ENCODE measurements at regions of chr22 and their contacts with region 1.

Region 1: GRCh38 chr22:42270512-42271417 is at the start of gene TCF20:
- DNase-seq: peak; percentile 76
- H3K4me3 ChIP-seq: peak within 1 kb of the TSS; percentile 94 to 99
- H3K27ac ChIP-seq: peak within 1 kb of the TSS; percentile 86 to 90
- H3K4me1 ChIP-seq: no peaks in the 10 kb centered on the region
- H3K27me3 ChIP-seq: no peaks in the 10 kb centered on the region
- CTCF ChIP-seq: no peak
- POLR2A ChIP-seq: no peak
- total RNA-seq, gene TCF20: 43.9 to 47.3 TPM

Region 2: GRCh38 chr22:42169055-42169469 is 101.7 kb before region 1 on chr22:
- intact Hi-C with region 1: no loop called
- DNase-seq: peak; percentile 60
- H3K4me3 ChIP-seq: no peak overlapping the region
- H3K27ac ChIP-seq: no peak overlapping the region
- H3K4me1 ChIP-seq: peaks cover 5% of the 10 kb centered on the region
- H3K27me3 ChIP-seq: no peaks in the 10 kb centered on the region
- CTCF ChIP-seq: peak; percentile 73 to 89 (median 85)
- POLR2A ChIP-seq: no peak

Region 3: GRCh38 chr22:42180349-42180842 is 90.4 kb before region 1 on chr22:
- intact Hi-C with region 1: loop called (anchors 10 kb)
- DNase-seq: no peak
- H3K4me3 ChIP-seq: no peak overlapping the region
- H3K27ac ChIP-seq: no peak overlapping the region
- H3K4me1 ChIP-seq: no peaks in the 10 kb centered on the region
- H3K27me3 ChIP-seq: no peaks in the 10 kb centered on the region
- CTCF ChIP-seq: no peak
- POLR2A ChIP-seq: no peak

Region 4: DNA sequence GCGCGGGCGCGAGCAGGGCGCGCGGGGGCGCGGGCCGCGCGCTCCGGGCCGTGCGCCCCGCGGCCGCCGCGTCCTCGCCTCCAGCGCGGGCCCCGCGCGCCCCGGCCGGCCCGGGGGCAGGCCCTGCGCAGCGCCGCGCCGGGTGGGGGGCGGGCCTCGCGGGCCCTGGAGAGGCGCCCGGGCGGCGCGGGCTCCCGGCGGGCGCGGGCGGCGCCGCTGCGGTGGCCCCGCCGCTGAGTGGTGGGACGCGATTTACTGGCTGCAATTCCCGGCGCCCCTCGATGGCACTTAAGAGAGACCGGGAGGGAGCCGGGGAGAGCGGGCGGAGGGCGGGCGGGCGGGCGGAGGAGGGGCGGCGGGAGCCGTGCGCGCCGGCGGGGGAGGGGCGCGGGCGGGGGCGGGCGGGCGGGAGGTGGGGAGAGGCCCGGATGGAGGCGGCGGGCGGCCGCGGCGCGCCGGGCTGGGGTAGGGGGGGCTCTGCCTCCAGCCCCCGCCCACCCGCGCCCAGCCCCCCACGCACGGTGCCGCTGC is 72.9 kb after region 1 on chr22:
- intact Hi-C with region 1: loop called (anchors 5 kb)
- DNase-seq: no peak
- H3K4me3 ChIP-seq: peak overlapping the region; percentile 39 to 43
- H3K27ac ChIP-seq: peak overlapping the region; percentile 76 to 78
- H3K4me1 ChIP-seq: no peaks in the 10 kb centered on the region
- H3K27me3 ChIP-seq: no peaks in the 10 kb centered on the region
- CTCF ChIP-seq: no peak
- POLR2A ChIP-seq: no peak

Region 5: GRCh38 chr22:42500161-42500835 is 229.5 kb after region 1 on chr22:
- intact Hi-C with region 1: no loop called
- DNase-seq: peak; percentile 86
- H3K4me3 ChIP-seq: peak overlapping the region; percentile 46 to 47
- H3K27ac ChIP-seq: peak overlapping the region; percentile 78 to 80
- H3K4me1 ChIP-seq: peaks cover 4% of the 10 kb centered on the region
- H3K27me3 ChIP-seq: no peaks in the 10 kb centered on the region
- CTCF ChIP-seq: peak in 1 of 4 experiments; percentile 39
- POLR2A ChIP-seq: peak; percentile 88